ENCODE measurements at regions of chr1 and their contacts with region 1.

Region 1: GRCh38 chr1:33055210-33056008 is 18.7 kb upstream of the AK2 start:
- DNase-seq: peak; percentile 69 to 91
- ATAC-seq: peak; percentile 92 to 94
- H3K4me3 ChIP-seq: no peak overlapping the region
- H3K27ac ChIP-seq: peak overlapping the region; percentile 78 to 85 (median 83)
- H3K4me1 ChIP-seq: peaks cover 0 to 14% of the 10 kb centered on the region in 2 donors
- H3K27me3 ChIP-seq: no peaks in the 10 kb centered on the region
- CTCF ChIP-seq: peak; percentile 70 to 85 (median 74)
- POLR2A ChIP-seq: no peak

Region 2: GRCh38 chr1:32933742-32934322 is 121.6 kb before region 1 on chr1:
- in situ Hi-C with region 1: loop called in 1 of 4 experiments (anchors 10 kb)
- intact Hi-C with region 1: loop called (anchors 1 kb)
- DNase-seq: no peak
- ATAC-seq: peak in 1 of 2 donors; percentile 49
- H3K4me3 ChIP-seq: no peak overlapping the region
- H3K27ac ChIP-seq: peak overlapping the region in 3 of 4 donors; percentile 26 to 59 (median 41)
- H3K4me1 ChIP-seq: no peaks in the 10 kb centered on the region
- H3K27me3 ChIP-seq: no peaks in the 10 kb centered on the region
- CTCF ChIP-seq: peak in 1 of 5 experiments; percentile 12
- POLR2A ChIP-seq: no peak

Region 3: DNA sequence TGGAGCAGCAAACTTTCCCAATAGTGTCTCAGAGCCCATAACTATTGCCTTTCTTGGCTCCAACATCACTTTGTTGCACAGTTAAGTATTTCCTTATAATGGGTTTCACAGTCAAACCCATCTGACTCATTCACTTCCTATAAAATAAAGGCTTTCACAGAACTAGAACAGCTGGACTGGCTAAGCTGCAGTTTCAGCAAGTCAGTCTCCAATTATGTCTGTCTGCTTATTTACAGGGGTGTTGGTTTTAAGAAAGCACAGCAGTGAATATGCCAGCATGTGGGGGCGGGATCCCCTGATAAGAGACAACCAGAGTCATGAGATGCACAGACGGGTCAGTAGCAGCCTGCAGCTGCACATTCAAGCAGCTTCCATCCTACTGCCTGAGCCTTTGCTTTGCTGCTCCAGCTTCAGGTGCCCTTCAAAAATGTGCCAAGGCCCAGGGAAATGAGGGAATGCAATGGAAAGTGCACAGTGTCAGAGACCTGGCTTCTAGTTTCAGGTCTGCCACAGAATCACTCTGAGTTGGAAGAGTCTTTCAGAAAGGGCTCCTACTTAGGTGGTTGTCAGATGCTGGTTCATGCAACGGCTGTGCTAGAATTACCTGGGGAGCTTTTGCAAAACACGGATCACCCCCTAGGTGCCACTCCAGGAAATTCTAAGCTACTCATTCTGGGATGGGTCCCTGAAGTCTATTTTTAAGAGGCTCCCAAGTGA is 115.6 kb before region 1 on chr1:
- in situ Hi-C with region 1: loop called in 1 of 4 experiments (anchors 10 kb)
- intact Hi-C with region 1: no loop called
- DNase-seq: no peak
- ATAC-seq: no peak
- H3K4me3 ChIP-seq: no peak overlapping the region
- H3K27ac ChIP-seq: no peak overlapping the region
- H3K4me1 ChIP-seq: peaks cover 4 to 6% of the 10 kb centered on the region in 2 donors
- H3K27me3 ChIP-seq: no peaks in the 10 kb centered on the region
- CTCF ChIP-seq: no peak
- POLR2A ChIP-seq: no peak

Region 4: GRCh38 chr1:32964461-32965250 is 90.8 kb before region 1 on chr1 and contains the start of gene RNF19B:
- in situ Hi-C with region 1: no loop called
- intact Hi-C with region 1: loop called (anchors 1 kb)
- DNase-seq: peak; percentile 92 to 93
- ATAC-seq: peak; percentile 89 to 90
- H3K4me3 ChIP-seq: peak within 1 kb of the TSS; percentile 66 to 85 (median 72)
- H3K27ac ChIP-seq: peak within 1 kb of the TSS; percentile 70 to 92 (median 90)
- H3K4me1 ChIP-seq: peaks cover 22 to 29% of the 10 kb centered on the region in 2 donors
- H3K27me3 ChIP-seq: peaks cover 0 to 6% (median 0%) of the 10 kb centered on the region in 3 donors
- CTCF ChIP-seq: peak in 3 of 5 experiments; percentile 16 to 57 (median 20)
- POLR2A ChIP-seq: peak; percentile 99
- total RNA-seq, gene RNF19B: 22.7 to 34.4 (median 28.6) TPM

Region 5: DNA sequence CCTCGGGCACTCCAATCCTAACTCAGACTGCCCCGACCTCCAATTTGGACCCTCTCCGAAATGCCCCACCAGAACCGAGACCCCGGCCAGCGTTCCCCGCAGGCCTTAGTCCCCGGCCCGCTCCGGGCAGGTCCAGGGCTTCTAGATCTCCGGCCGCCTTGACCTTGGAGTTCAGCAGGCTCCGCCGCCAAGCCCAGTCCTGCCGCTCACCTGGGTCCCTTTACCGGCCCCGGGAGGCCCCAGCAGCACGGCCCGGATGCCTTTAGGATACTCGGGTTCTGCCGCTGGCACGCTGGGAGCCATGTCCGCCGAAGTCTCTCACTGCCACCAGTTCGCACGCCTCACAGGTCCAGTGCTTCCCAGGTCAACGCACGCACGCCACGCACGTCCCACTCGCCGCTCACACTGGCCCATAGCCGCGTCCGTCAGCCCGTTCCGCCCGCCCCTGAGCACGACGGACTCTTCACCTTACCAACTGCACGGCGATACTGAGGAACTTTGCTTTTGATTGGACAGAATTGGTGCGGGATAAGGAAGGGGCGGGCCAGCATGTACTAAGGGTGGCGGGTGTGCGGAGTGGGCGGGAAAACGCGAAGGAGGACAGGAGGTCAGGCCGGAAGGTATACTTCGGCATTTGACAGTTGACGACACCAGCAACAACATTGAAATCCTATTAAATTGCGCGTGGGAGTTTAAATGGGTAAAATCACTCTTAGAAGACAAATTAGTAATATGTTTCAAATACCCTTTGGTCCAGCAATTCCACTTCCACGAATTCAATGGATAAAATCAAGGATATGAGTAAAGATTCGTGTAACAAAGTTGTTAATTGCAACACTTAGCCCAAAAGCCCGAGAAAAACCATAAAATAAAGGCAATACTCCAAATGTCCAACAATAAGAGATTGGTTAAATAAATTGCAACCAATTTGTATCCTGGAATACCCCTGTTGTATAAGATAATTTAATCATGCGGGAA is 18.6 kb before region 1 on chr1 and contains the start of gene AK2:
- in situ Hi-C with region 1: no loop called
- intact Hi-C with region 1: loop called (anchors 1 kb)
- DNase-seq: peak; percentile 98
- ATAC-seq: peak; percentile 93
- H3K4me3 ChIP-seq: peak within 1 kb of the TSS; percentile 78 to 99 (median 94)
- H3K27ac ChIP-seq: peak within 1 kb of the TSS; percentile 95 to 99 (median 98)
- H3K4me1 ChIP-seq: peaks cover 42 to 46% of the 10 kb centered on the region in 2 donors
- H3K27me3 ChIP-seq: no peaks in the 10 kb centered on the region
- CTCF ChIP-seq: no peak
- POLR2A ChIP-seq: peak; percentile 92 to 96
- total RNA-seq, gene AK2: 125 to 261 (median 152) TPM

Region 6: GRCh38 chr1:33080885-33081553 is 25.6 kb after region 1 on chr1 and contains the start of gene AZIN2:
- in situ Hi-C with region 1: no loop called
- intact Hi-C with region 1: loop called (anchors 2 kb)
- DNase-seq: peak; percentile 93 to 94
- ATAC-seq: peak; percentile 97 to 99
- H3K4me3 ChIP-seq: peak within 1 kb of the TSS; percentile 63 to 80 (median 68)
- H3K27ac ChIP-seq: peak within 1 kb of the TSS in 3 of 4 donors; percentile 36 to 66 (median 57)
- H3K4me1 ChIP-seq: peaks cover 13 to 18% of the 10 kb centered on the region in 2 donors
- H3K27me3 ChIP-seq: no peaks in the 10 kb centered on the region
- CTCF ChIP-seq: no peak
- POLR2A ChIP-seq: peak; percentile 57 to 88
- total RNA-seq, gene AZIN2: 0.52 to 3.1 (median 1.2) TPM

Measured in gastrocnemius medialis (tissue), 4 donors.